ENCODE measurements at regions of chr18 and their contacts with region 1.

Region 1: GRCh38 chr18:45722899-45723298 is 1.1 kb upstream of the SLC14A1 start:
- DNase-seq: peak; percentile 41
- ATAC-seq: peak; percentile 92
- H3K4me3 ChIP-seq: no peak overlapping the region
- H3K27ac ChIP-seq: no peak overlapping the region
- H3K4me1 ChIP-seq: no peaks in the 10 kb centered on the region
- H3K27me3 ChIP-seq: no peaks in the 10 kb centered on the region
- CTCF ChIP-seq: peak; percentile 62

Region 2: GRCh38 chr18:45839414-45840395 is 116.8 kb after region 1 on chr18:
- CTCF ChIA-PET with region 1: interaction called, 12 read pairs
- POLR2A ChIA-PET with region 1: no interaction called
- in situ Hi-C with region 1: no loop called
- intact Hi-C with region 1: loop called (anchors 5 kb)
- DNase-seq: no peak
- ATAC-seq: peak; percentile 85
- H3K4me3 ChIP-seq: no peak overlapping the region
- H3K27ac ChIP-seq: peak overlapping the region; percentile 23; the same call in 1 of the 2 replicates
- H3K4me1 ChIP-seq: peaks cover 3% of the 10 kb centered on the region; the same call in 1 of the 2 replicates
- H3K27me3 ChIP-seq: no peaks in the 10 kb centered on the region
- CTCF ChIP-seq: peak; percentile 57; the same call in 1 of the 2 replicates